Naive thymus-derived CD4-positive, alpha-beta T cell (primary cell): ENCODE measurements at regions of chr2 and their contacts with region 1.

Region 1: DNA sequence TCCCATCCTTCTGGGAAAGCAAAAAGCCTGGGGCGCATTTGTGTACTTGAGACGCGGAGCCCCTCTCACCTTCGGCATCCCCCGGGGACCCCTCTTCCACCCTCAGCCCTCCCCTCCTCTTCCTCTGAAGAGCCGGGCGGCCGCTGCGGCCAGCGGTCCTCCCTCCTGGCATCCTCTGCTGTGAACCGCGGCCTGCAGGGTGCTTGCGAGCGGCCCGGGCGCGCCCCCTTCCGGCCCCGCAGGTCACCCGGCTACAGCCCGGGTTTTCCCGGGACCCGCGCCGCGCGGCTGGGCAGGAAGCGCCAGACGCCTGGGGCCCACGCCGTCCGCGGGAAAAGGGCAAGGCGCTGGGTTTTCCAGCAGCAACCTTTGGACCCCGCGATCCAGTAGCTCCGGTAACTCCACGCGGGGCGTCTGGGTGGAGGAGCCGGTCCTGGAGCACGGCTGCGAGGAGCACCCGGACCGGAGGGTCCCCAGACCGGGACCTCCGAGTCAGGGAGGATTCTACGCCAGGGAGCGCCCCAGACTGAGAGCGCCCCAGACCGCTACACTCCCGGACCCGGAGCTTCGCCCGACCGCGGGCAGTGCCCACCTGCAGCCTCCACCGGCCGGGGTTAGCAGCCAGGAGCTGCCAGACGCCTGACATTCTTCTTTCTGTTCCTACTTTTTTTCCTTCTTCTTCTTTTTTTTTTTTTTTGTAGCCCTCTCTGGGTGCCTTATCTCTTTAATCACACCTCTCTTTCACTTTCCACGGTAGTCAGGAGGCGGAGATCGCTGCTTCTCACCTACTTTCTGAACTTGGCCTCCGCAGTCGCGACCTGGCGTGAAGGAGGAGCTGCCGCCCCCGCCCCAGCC is at the start of gene IL18R1:
- DNase-seq: peak; percentile 37 to 85 (median 57)
- ATAC-seq: peak; percentile 93
- H3K4me3 ChIP-seq: peak within 1 kb of the TSS; percentile 82
- H3K4me3 Mint-ChIP-seq: peak within 1 kb of the TSS; percentile 93 to 99 (median 96)
- H3K27ac ChIP-seq: peak within 1 kb of the TSS; percentile 79
- H3K27ac Mint-ChIP-seq: peak within 1 kb of the TSS; percentile 83 to 96 (median 92)
- H3K4me1 ChIP-seq: peaks cover 6 to 19% of the 10 kb centered on the region in 2 donors
- H3K4me1 Mint-ChIP-seq: peaks cover 17 to 48% (median 37%) of the 10 kb centered on the region in 7 donors
- H3K27me3 ChIP-seq: no peaks in the 10 kb centered on the region
- H3K27me3 Mint-ChIP-seq: no peaks in the 10 kb centered on the region
- total RNA-seq, gene IL18R1: 2.1 to 52.8 (median 5.3) TPM

Region 2: GRCh38 chr2:102005989-102006885 is 349.5 kb before region 1 on chr2:
- CTCF ChIA-PET with region 1: no interaction called
- POLR2A ChIA-PET with region 1: no interaction called
- intact Hi-C with region 1: loop called in 1 of 2 experiments (anchors 5 kb)
- DNase-seq: peak in 3 of 9 donors; percentile 23 to 28 (median 24)
- ATAC-seq: peak; percentile 71
- H3K4me3 ChIP-seq: no peak overlapping the region
- H3K4me3 Mint-ChIP-seq: no peak overlapping the region
- H3K27ac ChIP-seq: no peak overlapping the region
- H3K27ac Mint-ChIP-seq: no peak overlapping the region
- H3K4me1 ChIP-seq: peaks cover 0 to 12% of the 10 kb centered on the region in 2 donors
- H3K4me1 Mint-ChIP-seq: peaks cover 0 to 9% (median 0%) of the 10 kb centered on the region in 7 donors
- H3K27me3 ChIP-seq: no peaks in the 10 kb centered on the region
- H3K27me3 Mint-ChIP-seq: peaks cover 0 to 16% (median 10%) of the 10 kb centered on the region in 5 donors

Region 3: DNA sequence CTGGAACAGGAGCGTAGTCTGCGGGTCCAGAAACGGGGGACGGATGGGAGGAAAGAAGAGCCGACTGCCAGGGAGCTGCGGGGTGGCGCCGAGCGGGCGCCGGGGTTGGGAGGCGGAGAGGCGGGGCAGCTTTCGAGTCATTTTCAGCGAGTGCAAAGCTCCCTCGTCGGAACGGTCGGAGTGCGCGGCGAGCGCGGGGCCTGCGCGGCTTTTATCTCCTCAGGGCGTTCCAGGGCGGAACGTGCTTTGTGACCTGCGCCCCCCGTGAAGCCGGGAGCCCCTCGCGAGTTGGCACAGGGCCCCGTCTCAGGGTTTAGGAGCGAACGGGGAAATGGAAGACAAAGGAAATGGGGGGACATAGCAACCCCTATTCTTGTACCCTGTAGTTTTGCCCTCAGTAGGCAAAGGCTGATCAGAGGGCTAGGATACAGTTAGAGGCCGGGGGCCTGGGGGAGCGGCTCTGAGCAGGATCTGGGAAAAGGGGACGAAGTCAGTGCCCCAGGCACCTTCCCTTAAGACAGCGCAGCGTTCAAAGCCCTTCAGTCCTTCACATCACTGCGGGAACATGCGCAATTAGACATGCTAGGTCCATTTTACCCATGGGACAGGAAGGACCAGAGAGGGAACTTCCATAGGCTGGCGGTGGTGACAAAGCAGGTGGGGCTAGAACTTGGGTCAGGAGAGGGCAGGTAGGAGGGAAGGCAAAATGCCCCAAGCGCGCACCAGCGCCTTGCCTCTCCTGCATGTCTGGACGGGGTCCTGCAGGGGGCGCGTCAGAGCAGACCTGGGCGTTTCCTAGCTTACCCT is 104.5 kb before region 1 on chr2:
- CTCF ChIA-PET with region 1: interaction called, 8 read pairs
- POLR2A ChIA-PET with region 1: no interaction called
- intact Hi-C with region 1: loop called (anchors 1 kb)
- DNase-seq: peak; percentile 28 to 63 (median 57)
- ATAC-seq: peak; percentile 90
- H3K4me3 ChIP-seq: peak overlapping the region; percentile 75
- H3K4me3 Mint-ChIP-seq: peak overlapping the region; percentile 86 to 99 (median 94)
- H3K27ac ChIP-seq: no peak overlapping the region
- H3K27ac Mint-ChIP-seq: peak overlapping the region in 7 of 9 donors; percentile 56 to 94 (median 78)
- H3K4me1 ChIP-seq: peaks cover 0 to 18% of the 10 kb centered on the region in 2 donors
- H3K4me1 Mint-ChIP-seq: peaks cover 7 to 44% (median 14%) of the 10 kb centered on the region in 7 donors
- H3K27me3 ChIP-seq: no peaks in the 10 kb centered on the region
- H3K27me3 Mint-ChIP-seq: peaks cover 0 to 5% (median 2%) of the 10 kb centered on the region in 5 donors

Region 4: DNA sequence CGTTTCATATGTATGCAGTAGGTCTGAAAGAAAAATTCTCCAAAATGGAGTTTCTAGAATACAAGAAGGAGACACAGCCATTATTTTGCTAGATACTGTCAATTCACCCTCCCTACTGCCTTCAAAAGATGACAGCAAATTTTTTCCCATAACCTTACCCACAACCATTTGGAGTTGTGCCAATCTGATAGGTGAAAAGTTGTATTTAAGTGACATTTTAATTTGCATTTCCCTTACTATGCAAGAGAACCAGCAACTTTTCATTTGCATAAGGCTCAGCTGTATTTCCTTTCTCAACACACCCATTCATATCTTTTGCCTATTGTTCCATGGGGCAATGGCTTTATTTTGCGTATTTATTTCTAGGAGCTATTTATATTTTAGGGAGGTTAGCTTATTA is 35.8 kb after region 1 on chr2:
- CTCF ChIA-PET with region 1: no interaction called
- POLR2A ChIA-PET with region 1: no interaction called
- intact Hi-C with region 1: loop called in 1 of 2 experiments (anchors 5 kb)
- DNase-seq: peak in 6 of 9 donors; percentile 30 to 62 (median 45)
- ATAC-seq: peak; percentile 41
- H3K4me3 ChIP-seq: no peak overlapping the region
- H3K4me3 Mint-ChIP-seq: peak overlapping the region in 2 of 10 donors; percentile 1 to 16
- H3K27ac ChIP-seq: no peak overlapping the region
- H3K27ac Mint-ChIP-seq: peak overlapping the region in 1 of 9 donors; percentile 28
- H3K4me1 ChIP-seq: peaks cover 0 to 9% of the 10 kb centered on the region in 2 donors
- H3K4me1 Mint-ChIP-seq: peaks cover 10 to 24% (median 15%) of the 10 kb centered on the region in 7 donors
- H3K27me3 ChIP-seq: no peaks in the 10 kb centered on the region
- H3K27me3 Mint-ChIP-seq: no peaks in the 10 kb centered on the region